ENCODE measurements at regions of chr3 and their contacts with region 1.

Region 1: GRCh38 chr3:111326144-111326995 is 215.6 kb upstream of the CD96 start:
- DNase-seq: no peak
- ATAC-seq: no peak
- H3K4me3 ChIP-seq: no peak overlapping the region
- H3K4me3 Mint-ChIP-seq: no peak overlapping the region
- H3K27ac ChIP-seq: no peak overlapping the region
- H3K27ac Mint-ChIP-seq: no peak overlapping the region
- H3K4me1 ChIP-seq: peaks cover 7% of the 10 kb centered on the region
- H3K4me1 Mint-ChIP-seq: peaks cover 38% of the 10 kb centered on the region
- H3K27me3 ChIP-seq: no peaks in the 10 kb centered on the region
- H3K27me3 Mint-ChIP-seq: no peaks in the 10 kb centered on the region
- CTCF ChIP-seq: no peak

Region 2: DNA sequence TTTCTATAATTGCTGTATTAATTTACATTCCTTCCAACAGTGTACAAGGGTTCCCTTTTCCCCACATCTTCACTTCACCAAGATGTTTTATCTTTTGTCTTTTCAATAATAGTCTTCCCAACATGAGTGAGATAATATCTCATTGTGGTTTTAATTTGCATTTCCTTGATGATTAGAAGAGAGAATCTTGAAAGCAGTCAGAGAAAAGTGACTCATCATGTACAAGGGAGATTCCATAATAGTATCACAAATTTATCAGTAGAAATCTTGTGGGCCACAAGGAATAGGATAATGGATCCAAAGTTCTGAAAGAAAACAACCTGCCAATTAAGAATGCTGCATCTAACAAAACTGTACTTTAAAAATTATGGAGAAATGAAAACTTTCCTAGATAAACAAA is 65.5 kb before region 1 on chr3:
- CTCF ChIA-PET with region 1: no interaction called
- POLR2A ChIA-PET with region 1: no interaction called
- intact Hi-C with region 1: no loop called
- DNase-seq: peak in 3 of 14 experiments; percentile 17 to 48 (median 38)
- ATAC-seq: peak; percentile 32
- H3K4me3 ChIP-seq: no peak overlapping the region
- H3K4me3 Mint-ChIP-seq: no peak overlapping the region
- H3K27ac ChIP-seq: no peak overlapping the region
- H3K27ac Mint-ChIP-seq: no peak overlapping the region
- H3K4me1 ChIP-seq: no peaks in the 10 kb centered on the region
- H3K4me1 Mint-ChIP-seq: peaks cover 12% of the 10 kb centered on the region
- H3K27me3 ChIP-seq: no peaks in the 10 kb centered on the region
- H3K27me3 Mint-ChIP-seq: no peaks in the 10 kb centered on the region
- CTCF ChIP-seq: no peak

Region 3: DNA sequence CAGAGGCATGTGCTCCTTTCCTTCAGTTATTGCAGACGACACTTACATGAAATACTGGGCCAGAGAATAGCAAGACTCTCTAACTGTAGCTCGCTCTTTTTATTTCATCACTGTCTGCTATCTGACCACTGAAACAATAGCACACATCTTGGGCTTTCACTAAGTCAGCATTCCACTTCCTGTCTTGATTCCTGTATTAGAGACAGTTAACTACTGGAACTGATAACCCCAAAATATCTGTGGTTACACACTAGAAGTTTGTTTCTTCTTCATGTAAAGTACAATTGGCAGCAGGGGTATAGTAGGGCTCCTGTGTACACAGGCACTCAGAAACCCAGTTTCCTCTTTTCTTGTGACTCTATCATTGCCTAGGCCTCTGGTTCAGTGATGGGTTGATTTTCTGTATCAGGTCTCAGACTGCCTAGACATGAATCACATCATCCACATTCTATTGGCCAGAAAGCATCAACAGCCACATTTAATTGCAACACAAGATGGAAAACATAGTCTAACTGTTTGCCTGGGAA is 14.6 kb before region 1 on chr3:
- CTCF ChIA-PET with region 1: no interaction called
- POLR2A ChIA-PET with region 1: interaction called, 16 read pairs
- intact Hi-C with region 1: loop called in 1 of 2 experiments (anchors 2 kb)
- DNase-seq: peak in 4 of 14 experiments; percentile 14 to 56 (median 20)
- ATAC-seq: peak; percentile 65
- H3K4me3 ChIP-seq: no peak overlapping the region
- H3K4me3 Mint-ChIP-seq: peak overlapping the region; percentile 1
- H3K27ac ChIP-seq: peak overlapping the region; percentile 33 to 77
- H3K27ac Mint-ChIP-seq: no peak overlapping the region
- H3K4me1 ChIP-seq: peaks cover 42% of the 10 kb centered on the region
- H3K4me1 Mint-ChIP-seq: no peaks in the 10 kb centered on the region
- H3K27me3 ChIP-seq: no peaks in the 10 kb centered on the region
- H3K27me3 Mint-ChIP-seq: no peaks in the 10 kb centered on the region
- CTCF ChIP-seq: no peak

Measured in CD4-positive, alpha-beta T cell (primary cell).